ENCODE measurements at regions of chr5 and their contacts with region 1.

Region 1: DNA sequence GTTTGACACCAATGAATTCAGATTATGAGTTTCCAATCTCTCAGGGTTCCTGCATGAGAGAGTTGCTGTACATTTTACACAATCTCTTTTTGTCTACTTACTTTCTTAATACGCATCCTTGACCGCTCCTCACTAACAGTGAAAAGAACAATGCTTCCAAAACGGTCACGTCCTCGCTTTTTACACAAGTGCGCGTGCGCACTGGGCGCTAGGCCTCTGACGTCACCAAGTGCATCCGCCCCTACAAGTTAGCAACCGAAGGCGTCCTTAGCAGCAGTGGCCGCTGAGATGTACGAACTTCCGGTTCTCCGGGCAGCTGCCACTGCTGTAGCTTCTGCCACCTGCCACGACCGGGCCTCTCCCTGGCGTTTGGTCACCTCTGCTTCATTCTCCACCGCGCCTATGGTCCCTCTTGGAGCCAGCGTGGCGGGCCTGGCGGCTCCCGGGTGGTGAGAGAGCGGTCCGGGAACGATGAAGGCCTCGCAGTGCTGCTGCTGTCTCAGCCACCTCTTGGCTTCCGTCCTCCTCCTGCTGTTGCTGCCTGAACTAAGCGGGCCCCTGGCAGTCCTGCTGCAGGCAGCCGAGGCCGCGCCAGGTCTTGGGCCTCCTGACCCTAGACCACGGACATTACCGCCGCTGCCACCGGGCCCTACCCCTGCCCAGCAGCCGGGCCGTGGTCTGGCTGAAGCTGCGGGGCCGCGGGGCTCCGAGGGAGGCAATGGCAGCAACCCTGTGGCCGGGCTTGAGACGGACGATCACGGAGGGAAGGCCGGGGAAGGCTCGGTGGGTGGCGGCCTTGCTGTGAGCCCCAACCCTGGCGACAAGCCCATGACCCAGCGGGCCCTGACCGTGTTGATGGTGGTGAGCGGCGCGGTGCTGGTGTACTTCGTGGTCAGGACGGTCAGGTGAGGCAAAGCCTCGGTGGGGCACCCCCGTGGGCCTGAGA is at the start of gene FAM174A:
- DNase-seq: peak; percentile 95 to 96
- ATAC-seq: peak; percentile 99 to 100
- H3K4me3 ChIP-seq: peak within 1 kb of the TSS; percentile 75 to 93 (median 90)
- H3K27ac ChIP-seq: peak within 1 kb of the TSS; percentile 90 to 96 (median 93)
- H3K4me1 ChIP-seq: peaks cover 36 to 49% of the 10 kb centered on the region in 2 donors
- H3K27me3 ChIP-seq: no peaks in the 10 kb centered on the region
- CTCF ChIP-seq: peak in 1 of 5 experiments; percentile 8
- POLR2A ChIP-seq: peak; percentile 41 to 64
- total RNA-seq, gene FAM174A: 51.4 to 68.3 (median 58.6) TPM

Region 2: GRCh38 chr5:98928873-98929696 is 1606.2 kb before region 1 on chr5 and contains the start of gene CHD1:
- in situ Hi-C with region 1: no loop called
- intact Hi-C with region 1: loop called (anchors 5 kb)
- DNase-seq: peak; percentile 98 to 99
- ATAC-seq: peak; percentile 83 to 85
- H3K4me3 ChIP-seq: peak within 1 kb of the TSS; percentile 77 to 93 (median 84)
- H3K27ac ChIP-seq: peak within 1 kb of the TSS; percentile 99 to 100 (median 99)
- H3K4me1 ChIP-seq: peaks cover 53 to 57% of the 10 kb centered on the region in 2 donors
- H3K27me3 ChIP-seq: no peaks in the 10 kb centered on the region
- CTCF ChIP-seq: peak in 1 of 5 experiments; percentile 7
- POLR2A ChIP-seq: peak; percentile 97 to 98
- total RNA-seq, gene CHD1: 25.0 to 44.3 (median 33.8) TPM

Region 3: DNA sequence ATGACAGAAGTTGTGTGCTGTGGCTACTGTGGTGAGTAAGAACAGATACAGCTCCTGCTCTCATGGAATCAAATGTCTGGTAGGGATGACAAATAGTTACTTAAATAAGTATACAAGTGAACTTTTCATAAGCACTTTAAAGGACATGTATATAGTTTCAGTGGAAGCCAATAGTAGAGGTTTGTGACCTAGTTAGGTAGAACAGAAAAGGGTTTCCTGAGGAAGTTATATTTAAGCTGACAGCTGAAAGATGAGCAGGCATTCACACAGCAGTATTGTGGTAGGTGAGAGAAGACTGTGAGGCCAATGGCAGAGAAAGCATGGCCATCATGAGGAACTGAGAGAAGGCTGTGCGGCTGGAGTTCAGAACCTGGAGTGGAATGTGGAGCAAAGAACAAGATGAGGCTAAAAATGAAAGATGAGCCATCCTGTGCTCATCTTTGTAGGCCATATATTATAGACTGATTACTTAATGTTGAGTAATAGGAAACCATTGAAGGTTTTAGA is 15.3 kb after region 1 on chr5:
- in situ Hi-C with region 1: no loop called
- intact Hi-C with region 1: loop called (anchors 1 kb)
- DNase-seq: peak; percentile 56 to 57
- ATAC-seq: peak; percentile 96
- H3K4me3 ChIP-seq: peak overlapping the region in 1 of 4 donors; percentile 7
- H3K27ac ChIP-seq: peak overlapping the region; percentile 66 to 87 (median 77)
- H3K4me1 ChIP-seq: peaks cover 39 to 55% of the 10 kb centered on the region in 2 donors
- H3K27me3 ChIP-seq: no peaks in the 10 kb centered on the region
- CTCF ChIP-seq: no peak
- POLR2A ChIP-seq: no peak

Region 4: GRCh38 chr5:100595152-100595811 is 59.9 kb after region 1 on chr5:
- in situ Hi-C with region 1: no loop called
- intact Hi-C with region 1: loop called (anchors 2 kb)
- DNase-seq: peak; percentile 53 to 75
- ATAC-seq: peak; percentile 99
- H3K4me3 ChIP-seq: peak overlapping the region in 3 of 4 donors; percentile 23 to 38 (median 38)
- H3K27ac ChIP-seq: peak overlapping the region; percentile 61 to 80 (median 78)
- H3K4me1 ChIP-seq: peaks cover 10 to 50% of the 10 kb centered on the region in 2 donors
- H3K27me3 ChIP-seq: no peaks in the 10 kb centered on the region
- CTCF ChIP-seq: no peak
- POLR2A ChIP-seq: no peak

Region 5: GRCh38 chr5:100965291-100965690 is 430.0 kb after region 1 on chr5:
- in situ Hi-C with region 1: no loop called
- intact Hi-C with region 1: no loop called
- DNase-seq: no peak
- ATAC-seq: no peak
- H3K4me3 ChIP-seq: no peak overlapping the region
- H3K27ac ChIP-seq: no peak overlapping the region
- H3K4me1 ChIP-seq: no peaks in the 10 kb centered on the region
- H3K27me3 ChIP-seq: no peaks in the 10 kb centered on the region
- CTCF ChIP-seq: no peak
- POLR2A ChIP-seq: no peak

Measured in gastrocnemius medialis (tissue), 4 donors.